ENCODE measurements at regions of chr1 and their contacts with region 1.

Region 1: DNA sequence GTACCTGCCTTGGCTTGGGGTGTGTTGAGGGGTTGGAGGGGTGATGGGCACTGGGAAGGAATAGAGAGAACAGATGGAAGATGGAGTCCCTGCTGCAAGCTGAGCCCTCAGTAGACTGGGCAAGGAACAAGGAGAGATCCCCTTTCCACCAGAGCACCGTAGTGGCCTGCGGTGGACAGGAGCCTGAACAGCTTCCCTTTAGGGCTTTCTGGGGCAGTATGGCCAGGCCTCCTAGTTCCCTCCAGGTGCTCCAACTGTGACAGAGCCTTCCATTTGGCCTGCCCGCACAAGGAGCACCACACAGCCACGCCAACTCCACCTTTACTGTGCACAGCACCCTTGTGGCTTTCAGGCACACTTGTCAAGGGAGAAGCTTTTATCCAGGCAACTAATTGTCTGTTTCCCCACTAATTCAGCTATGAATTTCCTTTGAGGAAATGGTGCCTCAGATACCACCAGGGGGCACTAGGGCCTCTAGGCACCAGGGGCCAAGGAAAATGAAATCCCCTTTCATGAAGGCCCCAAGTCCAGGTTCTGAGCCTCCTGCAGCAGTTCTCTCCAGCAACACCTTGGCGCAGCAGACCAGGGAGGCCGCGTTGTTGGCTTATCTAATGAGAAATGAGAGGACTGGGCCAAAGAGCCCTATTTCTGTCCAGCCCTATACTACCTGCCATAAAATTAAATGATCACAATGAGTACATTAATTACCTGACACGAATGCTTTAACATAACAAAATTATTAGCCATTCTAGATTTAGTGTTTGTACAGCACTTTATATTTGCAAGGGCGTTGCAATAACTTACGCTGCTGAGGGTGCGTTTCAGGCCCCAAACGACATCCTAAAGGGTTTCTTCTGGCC is 23.1 kb upstream of the ERI3 start:
- DNase-seq: peak; percentile 61
- H3K4me3 ChIP-seq: no peak overlapping the region
- H3K27ac ChIP-seq: no peak overlapping the region
- H3K4me1 ChIP-seq: no peaks in the 10 kb centered on the region
- H3K27me3 ChIP-seq: peaks cover 3 to 14% of the 10 kb centered on the region in 2 experiments
- CTCF ChIP-seq: peak; percentile 79 to 81
- POLR2A ChIP-seq: no peak

Region 2: GRCh38 chr1:44170281-44170823 is 207.8 kb before region 1 on chr1:
- CTCF ChIA-PET with region 1: no interaction called
- POLR2A ChIA-PET with region 1: no interaction called
- dilution Hi-C with region 1: no loop called
- intact Hi-C with region 1: no loop called
- DNase-seq: no peak
- H3K4me3 ChIP-seq: no peak overlapping the region
- H3K27ac ChIP-seq: no peak overlapping the region
- H3K4me1 ChIP-seq: no peaks in the 10 kb centered on the region
- H3K27me3 ChIP-seq: peaks cover 0 to 8% of the 10 kb centered on the region in 2 experiments
- CTCF ChIP-seq: no peak
- POLR2A ChIP-seq: no peak

Region 3: GRCh38 chr1:44405041-44405797 is 27.1 kb after region 1 on chr1 and contains the start of gene RNF220:
- CTCF ChIA-PET with region 1: interaction called, 13 read pairs
- POLR2A ChIA-PET with region 1: no interaction called
- dilution Hi-C with region 1: no loop called
- intact Hi-C with region 1: no loop called
- DNase-seq: peak; percentile 75
- H3K4me3 ChIP-seq: peak within 1 kb of the TSS; percentile 33 to 52 (median 39)
- H3K27ac ChIP-seq: no peak within 1 kb of the TSS
- H3K4me1 ChIP-seq: peaks cover 25% of the 10 kb centered on the region
- H3K27me3 ChIP-seq: peaks cover 44 to 56% of the 10 kb centered on the region in 2 experiments
- CTCF ChIP-seq: no peak
- POLR2A ChIP-seq: no peak
- total RNA-seq, gene RNF220: 62.7 and 72.6 TPM in 2 replicates

Region 4: DNA sequence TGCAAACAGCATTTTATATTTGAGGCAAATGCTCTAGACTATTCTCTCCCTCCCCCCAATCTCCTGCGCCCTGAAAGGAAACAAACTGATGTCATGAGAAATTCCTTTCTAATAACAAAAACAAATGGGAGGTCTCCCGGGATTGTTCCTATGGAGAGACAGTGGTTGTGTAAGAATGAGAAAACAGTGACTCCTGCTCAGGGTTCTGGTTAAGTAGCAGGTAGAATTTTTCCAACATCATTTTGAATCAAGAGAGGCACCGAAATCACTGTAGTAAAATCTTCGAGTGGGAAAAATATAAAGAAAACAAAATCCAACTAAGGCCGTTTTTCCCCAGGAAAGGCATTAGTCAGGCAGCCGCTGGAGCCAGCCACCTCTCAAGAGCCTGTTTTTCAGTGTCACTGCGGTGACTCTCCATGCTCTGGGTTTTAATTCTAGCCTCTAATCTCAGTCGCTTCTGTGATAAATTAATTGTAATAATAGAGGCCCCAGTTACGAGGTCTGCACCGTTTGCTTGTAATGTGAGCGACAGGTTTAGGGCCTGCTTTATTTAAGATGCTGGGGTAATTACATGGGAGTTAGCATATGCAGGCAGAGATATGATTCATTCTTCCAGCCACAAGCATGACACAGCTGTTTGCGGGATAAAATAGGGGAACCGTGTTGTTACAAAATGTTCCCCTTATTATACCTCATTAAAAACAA is 107.2 kb after region 1 on chr1:
- CTCF ChIA-PET with region 1: interaction called, 11 read pairs
- POLR2A ChIA-PET with region 1: no interaction called
- dilution Hi-C with region 1: no loop called
- intact Hi-C with region 1: no loop called
- DNase-seq: peak; percentile 90
- H3K4me3 ChIP-seq: no peak overlapping the region
- H3K27ac ChIP-seq: peak overlapping the region; percentile 97
- H3K4me1 ChIP-seq: peaks cover 25% of the 10 kb centered on the region
- H3K27me3 ChIP-seq: peaks cover 0 to 3% of the 10 kb centered on the region in 2 experiments
- CTCF ChIP-seq: no peak
- POLR2A ChIP-seq: peak; percentile 14

Region 5: DNA sequence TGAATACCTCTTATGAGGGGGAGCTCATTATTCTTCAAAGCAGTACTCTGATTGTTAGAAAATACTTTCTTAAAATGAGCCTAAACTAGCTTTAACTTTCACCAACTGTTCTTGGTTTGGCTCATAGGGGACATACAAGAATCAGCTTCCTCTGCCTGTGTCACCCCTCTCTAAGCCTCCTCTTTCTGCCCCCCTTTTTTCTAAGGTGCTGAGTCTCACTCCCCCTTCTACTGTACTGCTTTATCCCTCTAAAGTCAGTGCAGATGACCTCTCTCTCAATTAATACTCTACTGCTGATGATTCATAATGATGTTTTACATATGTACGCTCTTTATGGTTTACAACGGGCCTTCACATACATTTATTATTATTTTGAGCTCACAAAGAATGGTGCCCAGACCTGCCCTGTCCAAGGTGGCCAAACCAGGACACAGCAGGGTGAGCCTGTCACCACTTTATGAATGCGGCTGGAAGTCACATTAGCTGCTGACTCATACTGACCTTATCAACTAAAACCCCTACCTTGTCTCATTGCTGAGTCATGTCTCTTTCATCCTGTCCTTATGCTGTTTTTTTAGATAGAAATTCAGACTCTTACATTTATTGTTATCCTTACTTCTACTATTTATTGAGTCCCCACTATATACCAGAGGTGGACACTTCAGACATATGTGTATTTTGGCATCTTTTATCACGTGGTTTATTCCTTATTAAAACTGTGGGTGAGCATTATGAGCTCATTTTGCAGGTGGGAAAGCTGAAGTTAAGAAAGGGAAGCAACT is 153.8 kb after region 1 on chr1:
- CTCF ChIA-PET with region 1: interaction called, 12 read pairs
- POLR2A ChIA-PET with region 1: no interaction called
- dilution Hi-C with region 1: no loop called
- intact Hi-C with region 1: no loop called
- DNase-seq: peak; percentile 20
- H3K4me3 ChIP-seq: no peak overlapping the region
- H3K27ac ChIP-seq: no peak overlapping the region
- H3K4me1 ChIP-seq: no peaks in the 10 kb centered on the region
- H3K27me3 ChIP-seq: peaks cover 0 to 2% of the 10 kb centered on the region in 2 experiments
- CTCF ChIP-seq: no peak
- POLR2A ChIP-seq: no peak

Region 6: GRCh38 chr1:44571712-44572571 is 193.8 kb after region 1 on chr1:
- CTCF ChIA-PET with region 1: interaction called, 25 read pairs
- POLR2A ChIA-PET with region 1: no interaction called
- dilution Hi-C with region 1: no loop called
- intact Hi-C with region 1: no loop called
- DNase-seq: peak; percentile 8
- H3K4me3 ChIP-seq: no peak overlapping the region
- H3K27ac ChIP-seq: no peak overlapping the region
- H3K4me1 ChIP-seq: no peaks in the 10 kb centered on the region
- H3K27me3 ChIP-seq: peaks cover 9 to 10% of the 10 kb centered on the region in 2 experiments
- CTCF ChIP-seq: peak; percentile 35 to 41
- POLR2A ChIP-seq: no peak

Region 7: GRCh38 chr1:44609412-44609767 is 231.2 kb after region 1 on chr1:
- CTCF ChIA-PET with region 1: interaction called, 398 read pairs
- POLR2A ChIA-PET with region 1: no interaction called
- dilution Hi-C with region 1: no loop called
- intact Hi-C with region 1: no loop called
- DNase-seq: peak; percentile 18
- H3K4me3 ChIP-seq: no peak overlapping the region
- H3K27ac ChIP-seq: no peak overlapping the region
- H3K4me1 ChIP-seq: no peaks in the 10 kb centered on the region
- H3K27me3 ChIP-seq: peaks cover 6 to 7% of the 10 kb centered on the region in 2 experiments
- CTCF ChIP-seq: peak; percentile 24 to 55
- POLR2A ChIP-seq: no peak

Measured in endothelial cell of umbilical vein (primary cell).